ENCODE measurements at regions of chr3 and their contacts with region 1.

Region 1: DNA sequence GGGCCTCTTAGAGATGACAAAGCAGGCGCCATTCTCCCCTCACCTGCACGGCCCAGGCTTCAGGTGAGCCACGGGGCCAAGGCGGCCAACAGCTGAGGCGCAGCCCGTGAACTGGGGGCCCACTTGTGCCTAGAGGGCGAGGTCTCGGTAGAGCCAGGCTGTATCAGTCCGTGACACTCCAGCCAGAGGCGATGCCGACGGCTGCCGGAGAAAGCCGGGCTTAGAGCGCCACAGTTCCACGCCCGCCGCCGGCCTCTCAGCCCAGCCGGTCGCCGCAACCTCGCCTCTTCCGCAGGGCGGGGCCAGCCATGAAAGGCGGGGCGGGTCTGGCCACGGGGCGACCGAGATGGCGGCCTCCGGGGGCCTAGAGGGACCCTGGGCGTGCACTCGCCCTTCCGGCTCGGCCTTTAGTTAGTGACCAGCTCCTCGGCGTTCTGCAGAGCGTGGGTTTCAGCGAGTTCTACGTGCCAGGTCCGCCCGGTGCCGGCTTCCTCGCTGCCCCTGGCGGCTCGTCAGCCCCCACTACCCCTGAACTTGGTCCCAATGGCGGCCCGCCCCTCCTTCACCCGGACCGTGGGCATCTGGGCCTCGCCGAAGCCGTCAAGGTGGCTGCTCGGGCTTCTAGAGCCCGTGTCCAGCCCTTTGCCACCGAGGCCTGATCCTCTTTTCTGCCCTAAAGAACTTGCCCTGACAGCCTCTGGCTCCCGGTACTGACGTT is at the start of gene ZNF621:
- DNase-seq: peak; percentile 62 to 86 (median 76)
- ATAC-seq: peak; percentile 94
- H3K4me3 Mint-ChIP-seq: peak within 1 kb of the TSS; percentile 89 to 98 (median 95)
- H3K27ac Mint-ChIP-seq: peak within 1 kb of the TSS; percentile 94 to 99 (median 97)
- H3K4me1 Mint-ChIP-seq: peaks cover 20 to 37% (median 29%) of the 10 kb centered on the region in 4 donors
- H3K27me3 Mint-ChIP-seq: no peaks in the 10 kb centered on the region
- polyA plus RNA-seq, gene ZNF621: 2.8 to 4.6 (median 3.3) TPM

Region 2: DNA sequence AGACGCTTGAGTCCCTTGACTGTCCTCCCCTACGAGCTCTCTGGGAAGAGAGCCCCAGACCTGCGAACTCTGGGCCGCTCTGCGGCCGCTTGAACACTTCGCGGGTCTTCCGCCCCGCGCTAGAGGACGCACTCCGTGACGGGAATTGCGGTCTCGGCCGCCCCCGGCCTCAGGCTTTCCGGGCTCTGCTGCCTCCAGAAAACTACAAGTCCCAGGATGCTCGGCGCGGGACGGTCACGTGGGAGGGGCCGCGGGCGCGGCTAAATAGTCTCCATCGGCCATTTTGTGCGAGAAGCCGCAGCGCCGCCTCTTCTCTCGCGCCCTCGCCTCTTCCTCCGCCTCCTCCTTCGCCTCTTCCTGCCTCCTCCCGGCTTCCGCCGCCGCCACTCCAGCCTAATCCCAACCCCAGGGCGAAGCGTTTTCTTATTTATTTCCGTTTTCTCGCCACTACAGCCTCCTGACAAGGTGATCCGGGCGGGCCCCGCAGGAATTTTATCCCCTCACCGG is 215.3 kb before region 1 on chr3 and contains the start of gene EIF1B:
- POLR2A ChIA-PET with region 1: interaction called, 10 read pairs
- DNase-seq: peak; percentile 96 to 99 (median 98)
- ATAC-seq: peak; percentile 87 to 91
- H3K4me3 Mint-ChIP-seq: peak within 1 kb of the TSS; percentile 98 to 100 (median 99)
- H3K27ac Mint-ChIP-seq: peak within 1 kb of the TSS; percentile 98 to 100 (median 99)
- H3K4me1 Mint-ChIP-seq: peaks cover 9 to 44% (median 34%) of the 10 kb centered on the region in 4 donors
- H3K27me3 Mint-ChIP-seq: no peaks in the 10 kb centered on the region
- polyA plus RNA-seq, gene EIF1B: 38.9 to 47.9 (median 44.2) TPM

Region 3: GRCh38 chr3:40321818-40322217 is 202.9 kb before region 1 on chr3:
- POLR2A ChIA-PET with region 1: no interaction called
- DNase-seq: no peak
- ATAC-seq: no peak
- H3K4me3 Mint-ChIP-seq: no peak overlapping the region
- H3K27ac Mint-ChIP-seq: no peak overlapping the region
- H3K4me1 Mint-ChIP-seq: peaks cover 0 to 3% (median 1%) of the 10 kb centered on the region in 4 donors
- H3K27me3 Mint-ChIP-seq: no peaks in the 10 kb centered on the region

Region 4: DNA sequence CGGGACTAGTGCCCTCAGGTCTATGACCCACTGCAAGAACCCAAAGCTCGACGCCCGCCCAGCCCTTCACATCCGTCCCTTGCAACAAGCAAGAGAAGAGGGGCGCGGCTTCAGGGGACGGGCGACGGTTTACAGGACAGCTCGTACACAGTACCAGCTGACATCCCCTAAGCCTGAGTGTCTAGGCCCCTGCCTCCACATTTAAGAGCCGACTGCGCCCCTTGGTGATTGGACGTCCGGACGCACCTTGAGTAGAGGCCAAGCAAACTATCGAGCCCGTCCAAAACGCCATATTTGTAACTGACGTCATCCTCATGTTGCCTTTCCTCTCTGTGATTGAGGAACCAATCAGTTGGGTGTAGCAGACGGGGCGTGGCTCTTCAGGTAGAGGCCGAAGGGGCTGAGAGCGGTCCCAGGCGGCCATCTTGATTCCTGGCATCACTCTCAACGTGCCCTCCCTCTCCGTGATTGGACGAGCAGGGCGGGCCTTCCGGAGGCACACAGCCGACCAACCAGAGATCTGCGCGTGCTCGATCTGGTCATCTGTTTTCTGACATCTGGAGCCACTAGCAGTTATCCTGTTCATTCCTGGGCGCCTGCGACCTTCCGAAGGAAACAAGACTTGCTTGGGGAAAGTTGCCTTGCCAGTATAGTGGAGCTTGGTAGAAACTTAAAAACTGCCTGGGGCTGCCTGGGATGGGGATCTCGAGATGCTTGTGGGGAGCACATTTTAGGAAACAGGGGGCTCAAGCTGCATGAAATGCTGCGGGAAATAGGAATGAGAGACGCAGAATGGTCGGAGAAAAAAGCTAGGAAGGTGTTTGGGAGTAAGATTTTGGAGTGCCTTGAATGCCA is 71.6 kb before region 1 on chr3:
- POLR2A ChIA-PET with region 1: interaction called, 22 read pairs
- DNase-seq: peak; percentile 85 to 98 (median 94)
- ATAC-seq: peak; percentile 90
- H3K4me3 Mint-ChIP-seq: peak overlapping the region; percentile 91 to 98 (median 96)
- H3K27ac Mint-ChIP-seq: peak overlapping the region; percentile 97 to 100 (median 100)
- H3K4me1 Mint-ChIP-seq: peaks cover 18 to 44% (median 42%) of the 10 kb centered on the region in 4 donors
- H3K27me3 Mint-ChIP-seq: peaks cover 0 to 1% (median 0%) of the 10 kb centered on the region in 5 donors

Region 5: GRCh38 chr3:40476478-40477470 is 48.0 kb before region 1 on chr3 and contains the start of gene ZNF619:
- POLR2A ChIA-PET with region 1: interaction called, 18 read pairs
- DNase-seq: peak; percentile 9 to 74 (median 44)
- ATAC-seq: peak; percentile 80 to 89
- H3K4me3 Mint-ChIP-seq: peak within 1 kb of the TSS; percentile 88 to 96 (median 93)
- H3K27ac Mint-ChIP-seq: peak within 1 kb of the TSS; percentile 85 to 98 (median 96)
- H3K4me1 Mint-ChIP-seq: peaks cover 12 to 29% (median 24%) of the 10 kb centered on the region in 4 donors
- H3K27me3 Mint-ChIP-seq: no peaks in the 10 kb centered on the region
- polyA plus RNA-seq, gene ZNF619: 2.3 to 3.1 (median 3.0) TPM

Region 6: DNA sequence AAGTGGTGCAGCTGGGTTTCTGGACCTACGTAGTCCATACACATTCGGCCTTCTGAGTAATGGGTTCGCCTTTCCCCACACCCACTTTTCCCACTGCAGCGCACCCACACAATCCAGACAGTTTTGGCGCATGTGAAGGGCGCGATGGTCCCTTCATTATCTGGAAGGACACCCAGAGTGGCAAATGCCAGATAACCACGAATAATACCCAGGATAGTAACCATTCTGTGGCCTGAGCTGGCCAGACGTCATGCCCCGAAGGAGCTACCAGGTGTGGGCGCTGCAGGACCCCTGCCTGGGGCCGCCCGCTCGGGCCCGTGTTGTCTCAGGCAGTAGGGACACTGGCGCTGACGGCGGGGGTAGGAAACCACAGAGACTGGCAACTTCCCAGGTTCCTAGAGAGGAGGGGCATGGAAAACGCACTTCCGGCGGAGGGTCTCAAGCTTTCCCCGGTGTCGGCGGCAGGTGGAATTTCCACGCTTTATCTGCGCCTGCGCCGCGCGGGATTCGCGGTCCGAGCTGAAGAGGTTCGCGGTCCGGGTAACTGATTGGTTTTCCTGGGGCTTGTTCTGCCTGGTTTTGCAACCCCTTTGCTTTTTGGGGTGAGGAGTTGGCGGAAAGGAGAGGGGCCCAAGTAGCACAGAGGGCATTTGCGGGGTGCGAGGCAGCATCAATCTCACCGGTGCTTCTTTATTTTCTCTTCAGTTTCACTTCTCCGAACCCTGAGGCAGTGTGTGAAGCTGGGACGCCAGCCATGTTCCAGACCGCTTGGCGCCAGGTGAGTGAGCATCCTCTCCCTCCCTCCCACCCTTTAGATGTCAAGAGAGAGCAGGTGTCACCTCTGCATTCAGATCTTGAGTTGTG is 18.9 kb before region 1 on chr3 and contains the start of gene ZNF620:
- POLR2A ChIA-PET with region 1: interaction called, 21 read pairs
- DNase-seq: peak; percentile 20 to 69 (median 40)
- ATAC-seq: peak; percentile 83 to 84
- H3K4me3 Mint-ChIP-seq: peak within 1 kb of the TSS; percentile 83 to 97 (median 95)
- H3K27ac Mint-ChIP-seq: peak within 1 kb of the TSS; percentile 38 to 94 (median 91)
- H3K4me1 Mint-ChIP-seq: peaks cover 3 to 22% (median 16%) of the 10 kb centered on the region in 4 donors
- H3K27me3 Mint-ChIP-seq: no peaks in the 10 kb centered on the region
- polyA plus RNA-seq, gene ZNF620: 3.1 to 4.0 (median 3.4) TPM

Region 7: GRCh38 chr3:40680685-40681657 is 156.2 kb after region 1 on chr3:
- POLR2A ChIA-PET with region 1: no interaction called
- DNase-seq: no peak
- ATAC-seq: no peak
- H3K4me3 Mint-ChIP-seq: no peak overlapping the region
- H3K27ac Mint-ChIP-seq: no peak overlapping the region
- H3K4me1 Mint-ChIP-seq: peaks cover 0 to 5% (median 1%) of the 10 kb centered on the region in 4 donors
- H3K27me3 Mint-ChIP-seq: peaks cover 0 to 4% (median 0%) of the 10 kb centered on the region in 5 donors